SK-N-SH (cell line): ENCODE measurements at regions of chr11 and their contacts with region 1.

Region 1: GRCh38 chr11:8168485-8169257 is at the start of gene RIC3:
- DNase-seq: peak; percentile 74
- H3K4me3 ChIP-seq: peak within 1 kb of the TSS in 1 of 2 experiments; percentile 56; a peak in 2 of 4 replicates
- H3K27ac ChIP-seq: peak within 1 kb of the TSS in 1 of 2 experiments; percentile 80; a peak in 2 of 4 replicates
- H3K4me1 ChIP-seq: peaks cover 0 to 2% of the 10 kb centered on the region in 2 experiments; a peak in 2 of 4 replicates
- H3K27me3 ChIP-seq: peaks cover 26% of the 10 kb centered on the region
- CTCF ChIP-seq: no peak
- EP300 ChIP-seq: no peak
- RAD21 ChIP-seq: no peak
- polyA plus RNA-seq, gene RIC3: 0.54 and 1.2 TPM in 2 replicates

Region 2: DNA sequence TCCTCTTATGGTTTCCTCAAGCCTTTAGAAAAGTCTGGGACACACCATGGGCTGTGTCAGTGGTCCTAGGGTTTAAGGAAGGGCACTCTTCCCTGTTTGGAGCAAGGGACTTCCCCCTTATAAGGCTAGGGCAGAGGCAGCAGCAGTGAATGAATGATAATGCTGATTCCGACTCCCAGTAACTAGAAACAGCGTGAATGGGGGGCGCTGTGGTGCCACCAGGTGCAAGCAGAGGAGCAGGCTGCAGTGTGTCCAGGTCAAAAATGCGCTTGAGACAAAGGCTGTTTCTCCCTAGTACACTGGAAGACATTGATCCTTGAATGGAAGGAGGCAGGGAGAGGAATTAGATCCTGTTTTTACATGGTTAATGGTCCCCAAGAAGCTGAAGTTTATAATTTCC is 11.8 kb after region 1 on chr11:
- CTCF ChIA-PET with region 1: interaction called, 15 read pairs
- POLR2A ChIA-PET with region 1: no interaction called
- DNase-seq: no peak
- H3K4me3 ChIP-seq: no peak overlapping the region
- H3K27ac ChIP-seq: no peak overlapping the region
- H3K4me1 ChIP-seq: no peaks in the 10 kb centered on the region; a peak in 1 of 4 replicates
- H3K27me3 ChIP-seq: peaks cover 5% of the 10 kb centered on the region; the same call in 1 of the 2 replicates
- CTCF ChIP-seq: no peak
- EP300 ChIP-seq: no peak
- RAD21 ChIP-seq: no peak